Heart right ventricle (tissue), 16 donors: ENCODE measurements at regions of chr11 and their contacts with region 1.

Region 1: DNA sequence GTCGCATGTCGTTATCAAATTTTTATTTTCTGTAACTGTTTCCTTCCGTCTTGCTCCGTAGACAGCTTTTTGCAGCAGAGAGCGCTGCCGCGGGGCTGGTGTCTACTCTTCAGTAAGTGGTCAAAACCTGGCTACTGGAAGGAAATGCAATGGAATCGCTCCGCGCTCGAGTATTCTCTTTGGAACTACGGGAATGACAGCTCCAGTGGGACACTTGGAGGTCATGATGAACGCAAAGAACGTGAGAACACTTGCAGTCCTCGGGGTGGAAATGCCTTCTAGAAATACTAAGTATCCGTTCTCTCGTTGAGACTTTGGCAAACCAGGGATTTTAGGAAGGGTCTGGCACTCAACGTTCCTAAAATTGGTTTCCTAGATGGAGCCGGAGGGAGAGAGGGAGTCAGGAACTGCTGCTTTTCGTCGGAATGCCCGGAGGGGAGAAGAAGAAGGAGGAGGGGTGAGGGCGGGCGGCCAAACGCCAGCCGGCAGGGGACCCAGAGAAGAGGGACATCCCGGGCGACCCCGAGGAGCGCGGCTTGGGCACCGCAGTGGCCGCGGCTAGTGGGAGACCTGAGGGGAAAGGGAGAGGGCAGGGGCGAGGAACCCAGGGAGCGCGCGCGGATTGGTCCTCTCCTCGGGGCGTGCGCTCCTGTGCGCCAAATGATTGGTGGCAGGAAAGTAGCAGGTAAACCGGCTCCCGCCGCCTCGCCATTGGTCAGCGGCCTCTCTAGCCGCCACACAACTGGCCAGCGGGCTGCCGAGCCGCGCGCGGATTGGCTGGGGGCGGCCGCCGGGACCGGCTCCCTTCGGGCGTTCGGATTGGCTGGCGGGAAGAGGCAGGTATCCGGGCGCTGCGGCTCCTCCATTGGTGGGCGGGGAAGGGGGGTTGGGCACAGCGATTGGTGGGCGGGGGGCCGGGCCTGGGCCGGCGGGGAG is 490 bp upstream of the BMAL1 start:
- DNase-seq: peak; percentile 97 to 99
- ATAC-seq: peak; percentile 95 to 98 (median 98)
- H3K4me3 ChIP-seq: peak overlapping the region; percentile 81 to 100 (median 97)
- H3K27ac ChIP-seq: peak overlapping the region; percentile 81 to 96 (median 88)
- H3K4me1 ChIP-seq: peaks cover 0 to 43% (median 19%) of the 10 kb centered on the region in 9 donors
- H3K27me3 ChIP-seq: peaks cover 0 to 25% (median 0%) of the 10 kb centered on the region in 7 donors
- CTCF ChIP-seq: no peak

Region 2: DNA sequence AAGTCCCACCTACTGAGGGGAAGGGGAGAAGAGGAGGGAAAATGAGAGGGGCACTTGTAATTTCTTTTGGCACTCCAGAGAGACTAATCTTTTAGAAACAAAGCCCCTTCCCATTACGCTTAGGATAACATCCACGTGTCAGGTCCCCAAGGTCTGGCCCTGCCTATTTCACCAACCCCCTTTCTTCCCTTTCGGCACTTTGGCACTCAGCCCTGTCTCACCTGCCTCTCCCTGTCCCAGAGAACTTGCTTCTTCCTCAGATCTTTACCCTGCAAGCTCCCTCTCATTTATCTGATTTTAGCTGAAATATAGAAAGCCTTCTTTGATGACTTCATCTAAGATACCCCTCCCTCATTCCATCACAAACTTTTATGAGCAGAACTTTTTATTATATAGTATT is 212.5 kb before region 1 on chr11:
- intact Hi-C with region 1: no loop called
- DNase-seq: no peak
- ATAC-seq: no peak
- H3K4me3 ChIP-seq: no peak overlapping the region
- H3K27ac ChIP-seq: no peak overlapping the region
- H3K4me1 ChIP-seq: no peaks in the 10 kb centered on the region
- H3K27me3 ChIP-seq: peaks cover 0 to 24% (median 9%) of the 10 kb centered on the region in 7 donors
- CTCF ChIP-seq: no peak

Region 3: DNA sequence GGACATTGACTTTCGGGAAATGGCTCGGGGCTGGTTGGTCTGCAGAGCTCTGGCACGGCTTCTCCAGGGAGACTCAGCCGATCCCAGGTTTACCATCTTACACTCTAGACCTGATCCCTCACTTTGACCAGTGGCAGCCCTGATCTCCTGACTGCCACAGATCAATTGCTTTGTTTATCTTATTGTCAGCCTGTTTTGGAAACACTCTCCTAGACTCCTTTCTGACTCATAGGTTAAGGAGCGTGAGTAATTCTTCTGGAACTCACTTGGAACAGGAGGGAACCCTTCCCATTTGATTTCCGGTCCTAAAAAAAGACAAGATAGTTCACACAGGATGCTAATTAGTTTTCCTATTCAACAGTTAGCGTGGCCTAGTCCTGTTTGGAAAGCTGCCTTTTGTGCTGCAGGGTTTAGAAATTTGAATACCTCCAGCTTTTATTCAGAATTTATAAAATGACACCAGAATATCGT is 15.5 kb before region 1 on chr11:
- intact Hi-C with region 1: loop called in 1 of 10 experiments (anchors 1 kb)
- DNase-seq: peak in 1 of 2 donors; percentile 8
- ATAC-seq: peak; percentile 81 to 95 (median 88)
- H3K4me3 ChIP-seq: no peak overlapping the region
- H3K27ac ChIP-seq: peak overlapping the region; percentile 10 to 84 (median 78)
- H3K4me1 ChIP-seq: peaks cover 0 to 32% (median 27%) of the 10 kb centered on the region in 9 donors
- H3K27me3 ChIP-seq: peaks cover 0 to 6% (median 0%) of the 10 kb centered on the region in 7 donors
- CTCF ChIP-seq: no peak

Region 4: DNA sequence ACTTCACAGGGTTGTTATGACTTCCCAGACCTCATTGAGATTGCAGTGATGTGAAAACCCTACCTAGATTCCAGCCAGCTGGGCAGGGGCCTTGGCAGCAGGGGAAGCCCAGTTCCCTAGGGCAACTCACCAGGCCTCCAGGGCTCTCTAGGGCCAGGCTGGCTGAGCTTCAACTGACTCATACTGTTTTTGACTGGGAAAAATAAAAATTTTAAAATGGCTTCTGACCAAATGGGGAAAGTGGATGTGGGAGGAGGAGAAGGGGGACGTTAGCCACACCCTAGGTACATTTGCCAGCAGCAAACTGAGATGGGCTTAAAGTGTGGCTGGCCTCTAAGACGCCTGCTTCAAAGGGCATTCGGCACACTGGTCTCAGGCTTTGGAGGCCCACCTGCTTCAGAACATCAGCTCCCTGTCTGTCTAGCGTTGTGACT is 39.4 kb after region 1 on chr11:
- intact Hi-C with region 1: loop called in 1 of 10 experiments (anchors 5 kb)
- DNase-seq: peak in 1 of 2 donors; percentile 50
- ATAC-seq: peak; percentile 17 to 79 (median 39)
- H3K4me3 ChIP-seq: no peak overlapping the region
- H3K27ac ChIP-seq: peak overlapping the region in 3 of 10 donors; percentile 11 to 58 (median 24)
- H3K4me1 ChIP-seq: peaks cover 4 to 76% (median 55%) of the 10 kb centered on the region in 9 donors
- H3K27me3 ChIP-seq: no peaks in the 10 kb centered on the region
- CTCF ChIP-seq: no peak

Region 5: DNA sequence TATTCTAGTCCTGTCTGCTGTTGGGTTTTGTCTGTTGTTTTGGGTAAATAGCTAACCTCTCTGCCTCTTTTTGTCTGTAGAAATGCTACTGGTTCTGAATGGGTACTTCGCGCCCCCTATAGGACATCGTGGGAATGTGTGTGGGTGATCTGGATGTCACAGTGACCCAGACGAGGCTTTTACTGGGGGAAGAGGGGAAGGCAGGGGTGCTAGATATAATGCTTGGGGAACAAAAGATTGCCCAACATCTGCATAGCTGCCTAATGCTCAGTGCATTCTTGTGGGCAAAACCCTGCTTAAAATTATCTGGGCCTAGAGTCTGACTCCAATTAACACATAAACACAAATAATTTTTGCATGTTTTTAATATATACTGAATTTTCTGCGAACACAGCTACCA is 58.2 kb after region 1 on chr11:
- intact Hi-C with region 1: loop called in 9 of 10 experiments (anchors 2 to 10 kb)
- DNase-seq: peak; percentile 43 to 54
- ATAC-seq: peak in 3 of 8 donors; percentile 32 to 56 (median 43)
- H3K4me3 ChIP-seq: no peak overlapping the region
- H3K27ac ChIP-seq: no peak overlapping the region
- H3K4me1 ChIP-seq: peaks cover 1 to 89% (median 76%) of the 10 kb centered on the region in 9 donors
- H3K27me3 ChIP-seq: no peaks in the 10 kb centered on the region
- CTCF ChIP-seq: peak; percentile 51 to 84 (median 78)

Region 6: GRCh38 chr11:13343931-13344717 is 67.0 kb after region 1 on chr11:
- intact Hi-C with region 1: loop called in 2 of 10 experiments (anchors 5 to 10 kb)
- DNase-seq: peak; percentile 20 to 81
- ATAC-seq: peak in 7 of 8 donors; percentile 25 to 57 (median 29)
- H3K4me3 ChIP-seq: no peak overlapping the region
- H3K27ac ChIP-seq: no peak overlapping the region
- H3K4me1 ChIP-seq: peaks cover 0 to 34% (median 22%) of the 10 kb centered on the region in 9 donors
- H3K27me3 ChIP-seq: no peaks in the 10 kb centered on the region
- CTCF ChIP-seq: peak; percentile 79 to 90 (median 86)